Common myeloid progenitor, CD34-positive (primary cell): ENCODE measurements at regions of chr12 and their contacts with region 1.

Region 1: DNA sequence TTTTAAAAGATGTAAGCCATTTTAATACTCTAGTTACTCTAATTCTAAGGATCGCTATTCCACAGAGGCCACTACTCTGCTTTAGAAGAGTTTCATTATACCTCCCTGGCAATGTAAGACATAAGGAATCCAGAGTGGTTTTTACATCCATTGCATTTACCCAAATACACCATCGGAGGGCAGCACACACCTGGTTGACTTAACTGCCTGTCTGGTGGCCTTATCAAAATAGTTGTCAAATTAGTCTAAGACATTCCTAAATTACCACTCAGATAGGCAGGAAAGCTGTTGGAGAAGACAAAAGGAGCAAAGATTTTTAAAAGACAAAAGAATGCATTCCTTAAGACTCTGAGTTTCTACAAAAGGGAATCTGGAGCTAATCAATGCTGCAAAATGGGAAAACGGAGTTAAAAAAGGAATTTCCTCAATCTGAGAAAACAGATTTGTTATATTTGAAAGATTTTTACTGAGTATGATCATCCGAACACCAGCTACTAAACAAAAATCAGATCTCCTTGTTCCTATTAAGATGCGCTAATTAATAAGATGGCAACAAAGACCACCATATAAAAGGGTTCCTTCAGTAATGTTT is 33.8 kb upstream of the FGD4 start:
- DNase-seq: peak; percentile 67 to 85 (median 77)
- H3K4me3 ChIP-seq: no peak overlapping the region
- H3K27ac ChIP-seq: no peak overlapping the region
- H3K4me1 ChIP-seq: no peaks in the 10 kb centered on the region
- H3K27me3 ChIP-seq: no peaks in the 10 kb centered on the region

Region 2: DNA sequence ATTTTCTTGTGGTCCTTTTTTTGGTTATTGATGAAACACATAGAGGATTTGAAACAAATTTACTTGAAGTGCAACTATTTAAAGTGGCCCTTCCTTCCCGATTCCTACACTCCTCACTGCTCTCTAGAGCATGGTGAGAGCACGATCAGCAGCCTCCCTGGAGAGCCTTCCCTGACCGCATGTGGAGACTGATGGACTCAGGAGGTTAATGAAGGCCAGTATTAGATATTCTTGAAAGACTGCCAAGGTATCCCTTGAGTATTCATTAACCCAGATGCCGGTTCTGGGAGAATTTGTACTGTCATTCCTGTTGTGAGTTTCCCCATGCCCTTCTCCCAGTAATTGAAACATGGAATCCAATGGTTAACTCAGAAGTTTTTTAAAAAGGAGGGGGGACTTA is 69.0 kb before region 1 on chr12:
- CTCF ChIA-PET with region 1: no interaction called
- POLR2A ChIA-PET with region 1: no interaction called
- DNase-seq: no peak
- H3K4me3 ChIP-seq: no peak overlapping the region
- H3K27ac ChIP-seq: no peak overlapping the region
- H3K4me1 ChIP-seq: peaks cover 0 to 7% (median 4%) of the 10 kb centered on the region in 4 experiments
- H3K27me3 ChIP-seq: no peaks in the 10 kb centered on the region

Region 3: DNA sequence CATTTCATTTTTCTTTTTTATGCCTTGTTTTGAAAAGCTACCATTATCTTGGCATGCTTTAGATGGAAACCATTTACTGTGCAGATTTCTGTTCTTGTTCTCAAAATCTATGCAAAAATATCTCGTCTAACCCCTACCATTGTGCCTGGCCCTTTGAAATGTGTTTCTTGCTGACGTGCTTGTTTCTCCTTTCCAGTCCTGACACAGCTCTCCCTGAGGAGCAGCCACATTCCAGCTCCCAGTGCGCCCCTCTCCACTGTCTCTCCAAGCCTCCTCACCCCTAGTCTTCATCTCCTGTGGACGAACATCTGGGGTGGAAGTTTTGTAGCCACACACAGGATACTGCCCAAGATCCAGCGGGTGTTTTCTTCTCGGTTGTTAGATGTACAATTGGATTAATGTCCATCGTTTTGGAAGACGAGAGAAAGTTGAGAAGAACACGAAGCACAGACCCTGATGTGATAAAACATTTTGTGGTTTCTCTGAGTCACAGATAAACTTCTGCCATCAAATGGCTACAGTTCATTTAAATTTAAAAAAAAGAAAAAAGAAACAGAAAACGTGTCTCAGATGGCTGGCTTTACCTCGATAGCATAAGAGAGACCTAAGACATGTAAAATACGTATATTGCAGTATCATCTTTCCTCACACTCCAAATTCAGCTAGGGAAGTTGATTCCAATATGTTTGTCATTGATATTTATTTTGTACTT is 11.9 kb after region 1 on chr12:
- CTCF ChIA-PET with region 1: interaction called, 13 read pairs
- POLR2A ChIA-PET with region 1: no interaction called
- DNase-seq: peak in 2 of 3 donors; percentile 39 to 57
- H3K4me3 ChIP-seq: no peak overlapping the region
- H3K27ac ChIP-seq: no peak overlapping the region
- H3K4me1 ChIP-seq: peaks cover 0 to 5% (median 3%) of the 10 kb centered on the region in 4 experiments
- H3K27me3 ChIP-seq: no peaks in the 10 kb centered on the region

Region 4: DNA sequence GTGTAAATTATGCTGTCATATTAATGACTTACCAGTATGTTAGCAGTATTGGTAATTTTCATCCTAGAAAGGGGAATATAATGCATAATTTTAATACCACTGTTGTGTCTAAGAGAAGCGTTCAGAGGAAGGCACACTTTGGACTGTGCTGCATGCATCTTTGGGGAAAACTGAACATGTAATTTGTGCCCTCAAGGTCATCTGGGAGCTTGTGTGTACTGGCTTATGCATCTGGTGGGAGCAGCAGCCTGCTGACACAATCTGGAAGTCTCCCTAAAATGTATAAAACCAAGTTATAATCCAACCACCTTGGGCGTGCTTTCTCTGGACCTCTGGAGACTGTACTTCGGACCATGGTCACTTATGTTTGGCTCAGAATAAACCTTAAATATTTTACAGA is 47.8 kb after region 1 on chr12:
- CTCF ChIA-PET with region 1: no interaction called
- POLR2A ChIA-PET with region 1: no interaction called
- DNase-seq: no peak
- H3K4me3 ChIP-seq: no peak overlapping the region
- H3K27ac ChIP-seq: no peak overlapping the region
- H3K4me1 ChIP-seq: no peaks in the 10 kb centered on the region
- H3K27me3 ChIP-seq: no peaks in the 10 kb centered on the region

Region 5: GRCh38 chr12:32671930-32672780 is 306.6 kb after region 1 on chr12:
- CTCF ChIA-PET with region 1: interaction called, 43 read pairs
- POLR2A ChIA-PET with region 1: no interaction called
- DNase-seq: peak; percentile 74 to 93 (median 91)
- H3K4me3 ChIP-seq: no peak overlapping the region
- H3K27ac ChIP-seq: no peak overlapping the region
- H3K4me1 ChIP-seq: peaks cover 0 to 3% (median under 1%) of the 10 kb centered on the region in 4 experiments
- H3K27me3 ChIP-seq: no peaks in the 10 kb centered on the region